CD8-positive, alpha-beta T cell (primary cell): ENCODE measurements at regions of chr11 and their contacts with region 1.

Region 1: GRCh38 chr11:106105986-106106385 is 28.5 kb downstream of the AASDHPPT start:
- DNase-seq: no peak
- ATAC-seq: no peak
- H3K4me3 ChIP-seq: no peak overlapping the region
- H3K4me3 Mint-ChIP-seq: no peak overlapping the region
- H3K27ac ChIP-seq: no peak overlapping the region
- H3K27ac Mint-ChIP-seq: no peak overlapping the region
- H3K4me1 ChIP-seq: no peaks in the 10 kb centered on the region
- H3K4me1 Mint-ChIP-seq: no peaks in the 10 kb centered on the region
- H3K27me3 ChIP-seq: no peaks in the 10 kb centered on the region
- H3K27me3 Mint-ChIP-seq: peaks cover 4% of the 10 kb centered on the region
- CTCF ChIP-seq: no peak

Region 2: GRCh38 chr11:106049727-106050476 is 56.1 kb before region 1 on chr11:
- CTCF ChIA-PET with region 1: no interaction called
- POLR2A ChIA-PET with region 1: no interaction called
- intact Hi-C with region 1: loop called in 1 of 2 experiments (anchors 5 kb)
- DNase-seq: no peak
- ATAC-seq: no peak
- H3K4me3 ChIP-seq: no peak overlapping the region
- H3K4me3 Mint-ChIP-seq: no peak overlapping the region
- H3K27ac ChIP-seq: no peak overlapping the region
- H3K27ac Mint-ChIP-seq: no peak overlapping the region
- H3K4me1 ChIP-seq: no peaks in the 10 kb centered on the region
- H3K4me1 Mint-ChIP-seq: no peaks in the 10 kb centered on the region
- H3K27me3 ChIP-seq: no peaks in the 10 kb centered on the region
- H3K27me3 Mint-ChIP-seq: peaks cover 2% of the 10 kb centered on the region
- CTCF ChIP-seq: no peak

Region 3: GRCh38 chr11:107882095-107882820 is 1776.3 kb after region 1 on chr11:
- CTCF ChIA-PET with region 1: no interaction called
- POLR2A ChIA-PET with region 1: no interaction called
- intact Hi-C with region 1: no loop called
- DNase-seq: no peak
- ATAC-seq: no peak
- H3K4me3 ChIP-seq: no peak overlapping the region
- H3K4me3 Mint-ChIP-seq: no peak overlapping the region
- H3K27ac ChIP-seq: no peak overlapping the region
- H3K27ac Mint-ChIP-seq: no peak overlapping the region
- H3K4me1 ChIP-seq: no peaks in the 10 kb centered on the region
- H3K4me1 Mint-ChIP-seq: no peaks in the 10 kb centered on the region
- H3K27me3 ChIP-seq: no peaks in the 10 kb centered on the region
- H3K27me3 Mint-ChIP-seq: peaks cover 5% of the 10 kb centered on the region
- CTCF ChIP-seq: no peak